ENCODE measurements at regions of chr5 and their contacts with region 1.

Region 1: DNA sequence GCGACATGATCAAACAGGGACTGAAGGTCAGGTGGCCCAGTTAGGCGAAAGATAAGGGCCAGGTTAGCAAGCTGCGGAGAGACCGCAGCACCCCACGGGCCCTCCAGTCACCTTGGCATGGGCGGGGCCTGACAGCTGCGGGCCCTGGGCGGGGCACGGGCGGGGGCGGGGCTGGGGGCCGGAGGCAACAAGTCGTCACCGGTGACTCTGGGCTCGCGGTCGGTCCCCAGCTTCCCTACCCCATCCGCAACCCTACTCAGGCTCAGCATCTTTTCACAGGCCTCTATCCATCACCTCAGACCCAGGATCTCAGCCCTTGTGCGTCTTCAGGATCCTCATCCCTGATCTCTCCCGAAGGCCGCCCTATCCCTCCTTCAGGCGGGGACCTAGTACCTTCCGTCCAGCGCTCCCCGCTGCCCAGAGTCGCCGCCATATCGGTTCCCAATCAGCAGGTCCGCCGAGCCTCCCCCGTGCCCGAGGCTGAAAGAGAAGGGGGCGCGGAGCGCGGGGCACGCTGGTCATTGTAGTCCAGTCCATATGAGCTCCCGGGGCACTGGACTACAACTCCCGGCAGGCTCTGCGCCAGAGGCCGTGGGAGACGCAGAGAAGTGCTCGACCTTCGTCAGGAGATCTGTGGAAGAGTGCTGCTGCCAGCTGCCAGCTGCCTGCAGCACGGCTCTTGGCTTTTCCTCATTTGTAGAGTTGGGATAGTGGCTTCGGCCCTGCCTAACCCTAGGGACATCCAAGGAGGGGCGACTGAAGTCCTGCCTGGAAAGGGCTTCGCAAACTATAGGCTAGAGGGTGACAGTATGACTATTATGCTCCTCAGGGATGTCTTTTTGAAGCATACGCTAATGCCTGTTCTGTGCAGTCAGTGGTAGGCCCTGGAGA is at the start of gene DNAJC18:
- DNase-seq: peak; percentile 79 to 94 (median 88)
- ATAC-seq: peak; percentile 81
- H3K4me3 ChIP-seq: peak within 1 kb of the TSS; percentile 89
- H3K4me3 Mint-ChIP-seq: peak within 1 kb of the TSS; percentile 98
- H3K27ac ChIP-seq: peak within 1 kb of the TSS; percentile 95 to 99
- H3K27ac Mint-ChIP-seq: peak within 1 kb of the TSS; percentile 96
- H3K4me1 ChIP-seq: peaks cover 31% of the 10 kb centered on the region
- H3K4me1 Mint-ChIP-seq: peaks cover 51% of the 10 kb centered on the region
- H3K27me3 ChIP-seq: no peaks in the 10 kb centered on the region
- H3K27me3 Mint-ChIP-seq: no peaks in the 10 kb centered on the region
- CTCF ChIP-seq: no peak
- total RNA-seq, gene DNAJC18: 7.5 to 8.7 TPM

Region 2: GRCh38 chr5:139293504-139294373 is 145.5 kb before region 1 on chr5 and contains the start of gene MATR3:
- CTCF ChIA-PET with region 1: no interaction called
- POLR2A ChIA-PET with region 1: interaction called, 12 read pairs
- intact Hi-C with region 1: no loop called
- DNase-seq: peak; percentile 88 to 96 (median 92)
- ATAC-seq: peak; percentile 89
- H3K4me3 ChIP-seq: peak within 1 kb of the TSS; percentile 95
- H3K4me3 Mint-ChIP-seq: peak within 1 kb of the TSS; percentile 99
- H3K27ac ChIP-seq: peak within 1 kb of the TSS; percentile 98 to 100
- H3K27ac Mint-ChIP-seq: peak within 1 kb of the TSS; percentile 99
- H3K4me1 ChIP-seq: peaks cover 27% of the 10 kb centered on the region
- H3K4me1 Mint-ChIP-seq: peaks cover 52% of the 10 kb centered on the region
- H3K27me3 ChIP-seq: no peaks in the 10 kb centered on the region
- H3K27me3 Mint-ChIP-seq: no peaks in the 10 kb centered on the region
- CTCF ChIP-seq: no peak
- total RNA-seq, gene MATR3: 376 to 401 TPM

Region 3: GRCh38 chr5:139458580-139459406 is 19.5 kb after region 1 on chr5:
- CTCF ChIA-PET with region 1: interaction called, 10 read pairs
- POLR2A ChIA-PET with region 1: interaction called, 26 read pairs
- intact Hi-C with region 1: loop called in 1 of 2 experiments (anchors 1 kb)
- DNase-seq: peak; percentile 55 to 94 (median 73)
- ATAC-seq: peak; percentile 99
- H3K4me3 ChIP-seq: no peak overlapping the region
- H3K4me3 Mint-ChIP-seq: peak overlapping the region; percentile 3
- H3K27ac ChIP-seq: peak overlapping the region; percentile 69 to 83
- H3K27ac Mint-ChIP-seq: peak overlapping the region; percentile 89
- H3K4me1 ChIP-seq: peaks cover 69% of the 10 kb centered on the region
- H3K4me1 Mint-ChIP-seq: peaks cover 76% of the 10 kb centered on the region
- H3K27me3 ChIP-seq: no peaks in the 10 kb centered on the region
- H3K27me3 Mint-ChIP-seq: no peaks in the 10 kb centered on the region
- CTCF ChIP-seq: no peak

Region 4: GRCh38 chr5:139468421-139468931 is 29.2 kb after region 1 on chr5:
- CTCF ChIA-PET with region 1: interaction called, 3 read pairs
- POLR2A ChIA-PET with region 1: interaction called, 18 read pairs
- intact Hi-C with region 1: loop called in 1 of 2 experiments (anchors 5 kb)
- DNase-seq: peak in 1 of 14 experiments; percentile 51
- ATAC-seq: no peak
- H3K4me3 ChIP-seq: no peak overlapping the region
- H3K4me3 Mint-ChIP-seq: peak overlapping the region; percentile 59
- H3K27ac ChIP-seq: no peak overlapping the region
- H3K27ac Mint-ChIP-seq: peak overlapping the region; percentile 92
- H3K4me1 ChIP-seq: peaks cover 61% of the 10 kb centered on the region
- H3K4me1 Mint-ChIP-seq: peaks cover 54% of the 10 kb centered on the region
- H3K27me3 ChIP-seq: no peaks in the 10 kb centered on the region
- H3K27me3 Mint-ChIP-seq: no peaks in the 10 kb centered on the region
- CTCF ChIP-seq: no peak

Region 5: DNA sequence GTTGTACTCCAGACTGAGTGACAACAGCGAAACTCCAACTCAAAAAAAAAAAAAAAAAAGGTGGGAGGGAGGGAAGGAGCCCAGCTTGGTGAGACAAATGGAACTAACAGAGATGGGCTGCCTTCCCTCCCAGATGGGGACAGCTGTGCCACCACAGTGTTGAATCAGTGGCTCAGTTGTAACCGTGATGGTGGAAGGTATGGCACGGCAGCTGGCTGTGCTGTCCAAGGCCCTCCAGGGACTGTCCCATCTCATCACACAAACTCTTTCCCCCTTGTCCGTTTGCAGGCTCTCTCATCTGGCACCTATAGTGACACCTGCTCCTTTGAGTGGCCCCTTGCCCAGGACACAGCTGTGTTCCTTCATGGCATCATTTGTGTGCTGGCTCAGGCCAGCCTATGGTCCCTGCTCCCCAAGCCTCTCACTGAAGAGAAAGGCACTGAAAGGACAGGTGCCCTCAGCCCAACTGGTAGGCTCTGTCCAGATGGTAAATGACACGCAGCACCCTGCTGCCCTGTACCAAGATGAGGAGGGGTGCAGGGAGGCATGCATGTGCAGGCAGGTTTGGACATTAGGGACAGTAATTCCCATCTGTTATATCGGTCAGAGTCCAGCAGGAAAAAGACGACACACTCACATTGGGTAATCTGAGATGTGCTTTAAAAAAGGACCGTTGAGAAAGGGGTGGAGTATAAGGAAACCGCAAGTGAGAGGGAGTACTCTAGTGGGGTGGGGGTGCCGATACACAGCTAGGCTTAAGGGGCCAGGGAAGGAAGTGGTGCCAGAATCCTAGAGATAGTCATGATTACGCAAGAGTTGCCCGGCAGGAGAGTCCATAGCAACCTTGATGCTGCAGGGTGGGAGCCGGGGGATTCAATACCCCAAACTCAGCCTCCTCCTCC is 35.9 kb after region 1 on chr5:
- CTCF ChIA-PET with region 1: interaction called, 3 read pairs
- POLR2A ChIA-PET with region 1: interaction called, 74 read pairs
- intact Hi-C with region 1: loop called in 1 of 2 experiments (anchors 5 kb)
- DNase-seq: peak in 5 of 14 experiments; percentile 24 to 75 (median 55)
- ATAC-seq: peak; percentile 65
- H3K4me3 ChIP-seq: peak overlapping the region; percentile 7
- H3K4me3 Mint-ChIP-seq: peak overlapping the region; percentile 81
- H3K27ac ChIP-seq: peak overlapping the region in 1 of 2 donors; percentile 32
- H3K27ac Mint-ChIP-seq: peak overlapping the region; percentile 92
- H3K4me1 ChIP-seq: peaks cover 98% of the 10 kb centered on the region
- H3K4me1 Mint-ChIP-seq: peaks cover 82% of the 10 kb centered on the region
- H3K27me3 ChIP-seq: no peaks in the 10 kb centered on the region
- H3K27me3 Mint-ChIP-seq: no peaks in the 10 kb centered on the region
- CTCF ChIP-seq: no peak

Region 6: GRCh38 chr5:139482050-139482889 is 43.0 kb after region 1 on chr5 and contains the start of gene STING1:
- CTCF ChIA-PET with region 1: interaction called, 4 read pairs
- POLR2A ChIA-PET with region 1: interaction called, 74 read pairs
- intact Hi-C with region 1: loop called (anchors 1 to 5 kb)
- DNase-seq: peak; percentile 40 to 88 (median 60)
- ATAC-seq: peak; percentile 71
- H3K4me3 ChIP-seq: peak within 1 kb of the TSS; percentile 81
- H3K4me3 Mint-ChIP-seq: peak within 1 kb of the TSS; percentile 91
- H3K27ac ChIP-seq: peak within 1 kb of the TSS; percentile 82
- H3K27ac Mint-ChIP-seq: peak within 1 kb of the TSS; percentile 92
- H3K4me1 ChIP-seq: peaks cover 57% of the 10 kb centered on the region
- H3K4me1 Mint-ChIP-seq: peaks cover 37% of the 10 kb centered on the region
- H3K27me3 ChIP-seq: no peaks in the 10 kb centered on the region
- H3K27me3 Mint-ChIP-seq: no peaks in the 10 kb centered on the region
- CTCF ChIP-seq: no peak
- total RNA-seq, gene STING1: 155 to 168 TPM